CD4-positive, alpha-beta T cell (primary cell): ENCODE measurements at regions of chr20 and their contacts with region 1.

Region 1: GRCh38 chr20:62926239-62927104 is at the start of gene DIDO1:
- DNase-seq: peak; percentile 78 to 96 (median 90)
- ATAC-seq: peak; percentile 74
- H3K4me3 ChIP-seq: peak within 1 kb of the TSS; percentile 99
- H3K4me3 Mint-ChIP-seq: peak within 1 kb of the TSS; percentile 98
- H3K27ac ChIP-seq: peak within 1 kb of the TSS; percentile 86 to 89
- H3K27ac Mint-ChIP-seq: peak within 1 kb of the TSS; percentile 89
- H3K4me1 ChIP-seq: peaks cover 72% of the 10 kb centered on the region
- H3K4me1 Mint-ChIP-seq: peaks cover 87% of the 10 kb centered on the region
- H3K27me3 ChIP-seq: no peaks in the 10 kb centered on the region
- H3K27me3 Mint-ChIP-seq: no peaks in the 10 kb centered on the region
- CTCF ChIP-seq: peak; percentile 64
- total RNA-seq, gene DIDO1: 51.9 to 54.3 TPM

Region 2: GRCh38 chr20:62808211-62808865 is 118.1 kb before region 1 on chr20:
- CTCF ChIA-PET with region 1: no interaction called
- POLR2A ChIA-PET with region 1: no interaction called
- intact Hi-C with region 1: loop called in 1 of 2 experiments (anchors 5 kb)
- DNase-seq: peak; percentile 64 to 85 (median 72)
- ATAC-seq: peak; percentile 58
- H3K4me3 ChIP-seq: no peak overlapping the region
- H3K4me3 Mint-ChIP-seq: peak overlapping the region; percentile 89
- H3K27ac ChIP-seq: no peak overlapping the region
- H3K27ac Mint-ChIP-seq: peak overlapping the region; percentile 84
- H3K4me1 ChIP-seq: peaks cover 41% of the 10 kb centered on the region
- H3K4me1 Mint-ChIP-seq: peaks cover 28% of the 10 kb centered on the region
- H3K27me3 ChIP-seq: no peaks in the 10 kb centered on the region
- H3K27me3 Mint-ChIP-seq: peaks cover 4% of the 10 kb centered on the region
- CTCF ChIP-seq: peak; percentile 91

Region 3: DNA sequence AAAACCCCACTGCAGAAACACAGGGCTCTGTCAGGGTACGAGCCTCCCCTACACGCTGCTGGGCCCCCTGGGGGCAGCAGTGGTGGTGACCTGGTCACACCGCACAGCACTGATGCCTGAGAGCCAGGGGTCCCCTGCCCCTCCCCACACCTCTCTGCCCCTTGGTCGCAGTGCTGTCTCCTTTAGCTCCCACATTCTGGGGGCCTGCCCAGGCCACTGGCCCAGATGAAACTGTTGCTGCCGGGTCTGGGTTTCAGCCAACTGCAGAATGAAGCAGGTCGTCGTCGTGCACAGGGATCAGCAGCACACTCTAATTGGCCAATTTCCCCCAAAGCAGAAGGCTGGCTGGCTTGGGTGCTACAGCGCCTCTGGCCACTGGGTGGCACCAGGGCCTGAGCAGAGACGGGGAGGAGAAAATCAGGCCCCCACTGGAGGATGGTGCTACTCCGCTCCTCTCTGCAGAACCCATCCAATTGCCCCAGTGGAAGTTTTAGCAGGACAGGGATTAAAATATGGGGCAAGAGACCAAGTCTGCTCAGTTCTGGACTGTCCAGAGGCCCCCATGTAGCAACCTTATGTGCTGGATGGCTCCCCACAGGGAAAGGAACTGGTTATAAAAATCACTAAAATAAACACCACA is 26.3 kb before region 1 on chr20:
- CTCF ChIA-PET with region 1: interaction called, 38 read pairs
- POLR2A ChIA-PET with region 1: interaction called, 3 read pairs
- intact Hi-C with region 1: loop called in 1 of 2 experiments (anchors 2 kb)
- DNase-seq: peak; percentile 63 to 89 (median 76)
- ATAC-seq: peak; percentile 89
- H3K4me3 ChIP-seq: no peak overlapping the region
- H3K4me3 Mint-ChIP-seq: peak overlapping the region; percentile 71
- H3K27ac ChIP-seq: peak overlapping the region; percentile 8 to 47
- H3K27ac Mint-ChIP-seq: peak overlapping the region; percentile 92
- H3K4me1 ChIP-seq: peaks cover 29% of the 10 kb centered on the region
- H3K4me1 Mint-ChIP-seq: peaks cover 40% of the 10 kb centered on the region
- H3K27me3 ChIP-seq: no peaks in the 10 kb centered on the region
- H3K27me3 Mint-ChIP-seq: no peaks in the 10 kb centered on the region
- CTCF ChIP-seq: peak; percentile 96

Region 4: GRCh38 chr20:62907384-62908317 is 18.8 kb before region 1 on chr20:
- CTCF ChIA-PET with region 1: interaction called, 16 read pairs
- POLR2A ChIA-PET with region 1: no interaction called
- intact Hi-C with region 1: no loop called
- DNase-seq: peak in 6 of 14 experiments; percentile 28 to 70 (median 42)
- ATAC-seq: peak; percentile 78
- H3K4me3 ChIP-seq: no peak overlapping the region
- H3K4me3 Mint-ChIP-seq: no peak overlapping the region
- H3K27ac ChIP-seq: no peak overlapping the region
- H3K27ac Mint-ChIP-seq: peak overlapping the region; percentile 43
- H3K4me1 ChIP-seq: peaks cover 12% of the 10 kb centered on the region
- H3K4me1 Mint-ChIP-seq: peaks cover 34% of the 10 kb centered on the region
- H3K27me3 ChIP-seq: no peaks in the 10 kb centered on the region
- H3K27me3 Mint-ChIP-seq: no peaks in the 10 kb centered on the region
- CTCF ChIP-seq: peak; percentile 55

Region 5: GRCh38 chr20:62953839-62954703 is 27.6 kb after region 1 on chr20:
- CTCF ChIA-PET with region 1: no interaction called
- POLR2A ChIA-PET with region 1: interaction called, 11 read pairs
- intact Hi-C with region 1: no loop called
- DNase-seq: peak; percentile 48 to 88 (median 68)
- ATAC-seq: peak; percentile 87
- H3K4me3 ChIP-seq: peak overlapping the region; percentile 46
- H3K4me3 Mint-ChIP-seq: peak overlapping the region; percentile 88
- H3K27ac ChIP-seq: peak overlapping the region; percentile 17 to 78
- H3K27ac Mint-ChIP-seq: peak overlapping the region; percentile 90
- H3K4me1 ChIP-seq: peaks cover 49% of the 10 kb centered on the region
- H3K4me1 Mint-ChIP-seq: peaks cover 31% of the 10 kb centered on the region
- H3K27me3 ChIP-seq: no peaks in the 10 kb centered on the region
- H3K27me3 Mint-ChIP-seq: no peaks in the 10 kb centered on the region
- CTCF ChIP-seq: no peak